Activated T-helper 1 cell treated with anti-CD3 and anti-CD28 coated beads, Interleukin-12 subunit alpha, Interleukin-12 subunit beta, Interleukin-2, Interleukin-4 antibody, amounts not matched to agents 30 ng/mL and 10 ng/mL and 1 ng/mL, durations not matched to agents 14 hours and 24 hours and 36 hours (primary cell): ENCODE measurements at regions of chr9 and their contacts with region 1.

Region 1: GRCh38 chr9:79824265-79824664 is 252.5 kb downstream of the TLE4 start:
- DNase-seq: no peak
- H3K4me3 Mint-ChIP-seq: peak overlapping the region; percentile 19
- H3K27ac Mint-ChIP-seq: no peak overlapping the region
- H3K4me1 Mint-ChIP-seq: peaks cover 32% of the 10 kb centered on the region
- H3K27me3 Mint-ChIP-seq: no peaks in the 10 kb centered on the region

Region 2: DNA sequence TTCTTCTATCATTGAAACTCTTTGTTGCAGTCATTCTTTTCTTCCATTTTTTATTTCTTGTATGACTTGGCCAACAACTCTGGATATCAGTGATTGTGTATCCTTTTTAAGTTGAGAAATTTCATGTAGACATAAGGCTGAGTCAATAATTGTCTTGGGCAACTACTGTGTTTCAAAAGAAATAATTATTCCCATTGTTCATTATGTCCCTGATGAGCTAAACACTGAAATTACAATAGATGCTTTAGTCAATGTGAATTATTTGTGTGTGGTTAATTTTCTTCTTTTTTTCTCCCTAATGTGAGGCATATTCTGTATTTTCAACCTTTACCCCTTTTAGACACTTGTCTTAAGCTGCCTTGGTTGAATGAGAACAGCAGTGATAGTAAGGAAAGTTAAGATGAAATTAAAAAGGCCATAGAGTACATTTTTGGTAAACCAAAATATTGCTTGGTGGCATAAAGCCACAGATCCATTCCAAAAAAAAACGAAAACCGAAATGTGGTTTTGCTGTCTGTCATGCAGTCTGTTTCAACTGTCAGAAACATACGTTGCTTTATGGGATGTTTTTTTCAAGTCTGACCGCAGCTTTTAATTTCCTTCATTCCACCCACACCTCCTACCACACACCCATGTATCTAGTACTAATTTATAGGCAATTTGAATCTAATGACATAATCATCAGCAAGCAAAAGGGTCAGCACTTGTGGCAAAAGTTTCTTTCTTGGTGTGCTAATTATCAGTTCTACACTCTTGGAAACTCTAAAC is 231.4 kb before region 1 on chr9:
- intact Hi-C with region 1: no loop called
- DNase-seq: peak; percentile 14
- H3K4me3 Mint-ChIP-seq: no peak overlapping the region
- H3K27ac Mint-ChIP-seq: peak overlapping the region; percentile 19
- H3K4me1 Mint-ChIP-seq: peaks cover 49% of the 10 kb centered on the region
- H3K27me3 Mint-ChIP-seq: peaks cover 16% of the 10 kb centered on the region

Region 3: GRCh38 chr9:79799691-79800335 is 24.5 kb before region 1 on chr9:
- intact Hi-C with region 1: no loop called
- DNase-seq: no peak
- H3K4me3 Mint-ChIP-seq: no peak overlapping the region
- H3K27ac Mint-ChIP-seq: no peak overlapping the region
- H3K4me1 Mint-ChIP-seq: no peaks in the 10 kb centered on the region
- H3K27me3 Mint-ChIP-seq: no peaks in the 10 kb centered on the region

Region 4: GRCh38 chr9:79955300-79955699 is 131.0 kb after region 1 on chr9:
- intact Hi-C with region 1: loop called (anchors 10 kb)
- DNase-seq: no peak
- H3K4me3 Mint-ChIP-seq: no peak overlapping the region
- H3K27ac Mint-ChIP-seq: no peak overlapping the region
- H3K4me1 Mint-ChIP-seq: no peaks in the 10 kb centered on the region
- H3K27me3 Mint-ChIP-seq: no peaks in the 10 kb centered on the region

Region 5: GRCh38 chr9:80085668-80086067 is 261.4 kb after region 1 on chr9:
- intact Hi-C with region 1: no loop called
- DNase-seq: no peak
- H3K4me3 Mint-ChIP-seq: no peak overlapping the region
- H3K27ac Mint-ChIP-seq: no peak overlapping the region
- H3K4me1 Mint-ChIP-seq: no peaks in the 10 kb centered on the region
- H3K27me3 Mint-ChIP-seq: no peaks in the 10 kb centered on the region